Activated T-helper 2 cell treated with anti-CD3 and anti-CD28 coated beads, Interferon-gamma antibody, Interleukin-2, Interleukin-4, amounts not matched to agents 10 μg/mL and 5 μg/mL and 100 μg/mL, durations not matched to agents 14 hours and 24 hours and 36 hours (primary cell): ENCODE measurements at regions of chr6 and their contacts with region 1.

Region 1: DNA sequence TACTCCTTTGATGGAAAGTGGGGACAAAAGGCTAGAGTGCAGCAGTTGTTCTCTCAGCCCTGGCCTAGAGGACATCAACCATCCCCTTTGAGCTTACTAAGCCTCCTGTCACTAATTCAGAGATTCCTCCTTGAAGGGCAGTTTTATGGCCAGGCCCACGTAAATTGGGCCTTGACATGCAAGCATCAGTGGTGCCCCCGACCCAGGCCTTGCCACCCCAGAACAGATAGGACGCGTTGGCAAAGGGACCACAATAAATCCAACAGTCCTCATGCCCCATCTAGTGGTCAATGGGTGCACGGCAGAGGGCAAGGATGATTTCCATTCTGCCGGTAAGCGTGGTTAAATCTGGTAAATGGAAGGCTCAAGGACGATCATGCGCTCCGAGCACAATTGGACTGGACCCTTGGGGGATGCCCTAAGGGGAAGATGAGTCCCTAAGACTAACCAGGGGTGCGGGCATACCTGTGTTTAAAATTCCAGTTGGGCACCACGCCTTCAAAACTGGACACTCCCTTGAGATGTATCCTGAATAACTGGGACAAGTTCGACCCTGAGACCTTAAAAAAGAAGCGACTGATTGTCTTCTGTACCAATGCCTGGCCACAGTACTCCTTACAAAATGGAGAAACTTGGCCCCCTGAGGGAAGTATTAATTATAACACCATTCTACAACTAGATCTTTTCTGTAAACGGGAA is 32.6 kb downstream of the CEP85L start:
- DNase-seq: peak; percentile 34
- H3K4me3 Mint-ChIP-seq: no peak overlapping the region
- H3K27ac Mint-ChIP-seq: no peak overlapping the region
- H3K4me1 Mint-ChIP-seq: peaks cover 14% of the 10 kb centered on the region
- H3K27me3 Mint-ChIP-seq: no peaks in the 10 kb centered on the region

Region 2: DNA sequence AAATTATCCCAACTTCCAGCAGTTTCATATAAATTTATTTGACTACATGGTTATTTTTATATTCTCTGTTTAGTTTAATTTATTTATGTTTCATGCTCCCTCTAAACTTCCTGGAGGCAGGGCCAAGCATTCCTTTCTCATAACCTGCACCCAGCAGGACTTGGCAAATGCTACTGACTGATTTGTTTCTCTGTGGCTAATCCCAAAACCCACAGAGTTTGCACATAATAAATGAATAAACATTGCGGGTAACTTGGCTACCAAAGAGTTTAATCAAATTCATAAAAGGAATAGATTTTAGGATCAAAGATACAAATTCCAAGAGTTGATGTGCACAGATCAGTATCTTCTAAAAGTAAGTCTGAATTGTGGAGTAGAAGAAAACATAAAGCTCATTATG is 472.2 kb before region 1 on chr6:
- intact Hi-C with region 1: no loop called
- DNase-seq: no peak
- H3K4me3 Mint-ChIP-seq: no peak overlapping the region
- H3K27ac Mint-ChIP-seq: no peak overlapping the region
- H3K4me1 Mint-ChIP-seq: no peaks in the 10 kb centered on the region
- H3K27me3 Mint-ChIP-seq: peaks cover 1% of the 10 kb centered on the region

Region 3: GRCh38 chr6:118283766-118284165 is 335.1 kb before region 1 on chr6:
- intact Hi-C with region 1: loop called (anchors 2 kb)
- DNase-seq: no peak
- H3K4me3 Mint-ChIP-seq: no peak overlapping the region
- H3K27ac Mint-ChIP-seq: no peak overlapping the region
- H3K4me1 Mint-ChIP-seq: peaks cover 6% of the 10 kb centered on the region
- H3K27me3 Mint-ChIP-seq: peaks cover 26% of the 10 kb centered on the region

Region 4: GRCh38 chr6:118565311-118565960 is 53.4 kb before region 1 on chr6:
- intact Hi-C with region 1: loop called (anchors 1 kb)
- DNase-seq: no peak
- H3K4me3 Mint-ChIP-seq: no peak overlapping the region
- H3K27ac Mint-ChIP-seq: no peak overlapping the region
- H3K4me1 Mint-ChIP-seq: peaks cover 20% of the 10 kb centered on the region
- H3K27me3 Mint-ChIP-seq: no peaks in the 10 kb centered on the region

Region 5: GRCh38 chr6:118581489-118581959 is 37.3 kb before region 1 on chr6:
- intact Hi-C with region 1: no loop called
- DNase-seq: no peak
- H3K4me3 Mint-ChIP-seq: no peak overlapping the region
- H3K27ac Mint-ChIP-seq: no peak overlapping the region
- H3K4me1 Mint-ChIP-seq: peaks cover 2% of the 10 kb centered on the region
- H3K27me3 Mint-ChIP-seq: no peaks in the 10 kb centered on the region